Common myeloid progenitor, CD34-positive (primary cell): ENCODE measurements at regions of chr1 and their contacts with region 1.

Region 1: GRCh38 chr1:162056043-162056442 is 13.4 kb upstream of the NOS1AP start:
- DNase-seq: peak; percentile 51 to 72 (median 69)
- H3K4me3 ChIP-seq: peak overlapping the region in 1 of 7 experiments; percentile 29
- H3K27ac ChIP-seq: no peak overlapping the region
- H3K4me1 ChIP-seq: peaks cover 0 to 6% (median under 1%) of the 10 kb centered on the region in 4 experiments
- H3K27me3 ChIP-seq: no peaks in the 10 kb centered on the region

Region 2: DNA sequence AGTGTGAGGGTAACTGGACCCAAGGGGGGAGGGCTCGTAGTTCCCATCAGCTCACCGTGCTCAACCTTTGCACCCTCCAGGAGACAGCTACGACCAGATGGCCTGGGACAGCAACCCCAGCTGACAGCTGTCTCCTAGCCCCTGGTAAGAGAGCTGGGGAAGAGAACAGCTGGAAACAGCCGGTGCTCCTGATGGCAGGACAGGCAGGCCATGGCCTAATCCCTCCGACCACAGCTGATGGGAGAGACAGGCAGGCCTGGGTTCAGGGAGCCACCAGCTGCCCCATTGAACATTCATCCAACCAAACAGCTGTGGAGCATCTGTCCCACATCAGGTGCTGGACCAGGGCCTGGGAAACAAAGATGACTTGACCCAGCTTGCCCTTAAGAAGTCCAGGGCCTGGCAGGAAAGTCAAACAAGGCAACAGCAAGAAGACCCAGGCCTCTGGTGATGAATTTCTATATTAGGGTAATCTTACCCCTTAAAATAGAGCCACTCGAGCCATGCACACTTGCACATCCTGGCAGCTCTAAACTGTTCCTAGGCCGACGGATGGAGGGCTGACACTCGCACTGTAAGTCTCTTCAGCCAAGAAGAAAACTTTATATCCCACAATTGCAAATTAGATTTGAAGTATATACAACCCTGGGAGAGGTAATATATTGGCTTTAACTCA is 44.6 kb before region 1 on chr1:
- CTCF ChIA-PET with region 1: no interaction called
- POLR2A ChIA-PET with region 1: no interaction called
- DNase-seq: no peak
- H3K4me3 ChIP-seq: no peak overlapping the region
- H3K27ac ChIP-seq: no peak overlapping the region
- H3K4me1 ChIP-seq: peaks cover 0 to 4% (median 2%) of the 10 kb centered on the region in 4 experiments
- H3K27me3 ChIP-seq: no peaks in the 10 kb centered on the region

Region 3: GRCh38 chr1:162213281-162213912 is 157.4 kb after region 1 on chr1:
- CTCF ChIA-PET with region 1: no interaction called
- POLR2A ChIA-PET with region 1: no interaction called
- DNase-seq: no peak
- H3K4me3 ChIP-seq: no peak overlapping the region
- H3K27ac ChIP-seq: no peak overlapping the region
- H3K4me1 ChIP-seq: peaks cover 0 to 7% (median 0%) of the 10 kb centered on the region in 4 experiments
- H3K27me3 ChIP-seq: no peaks in the 10 kb centered on the region

Region 4: GRCh38 chr1:162279136-162279498 is 223.1 kb after region 1 on chr1:
- CTCF ChIA-PET with region 1: interaction called, 10 read pairs
- POLR2A ChIA-PET with region 1: no interaction called
- DNase-seq: no peak
- H3K4me3 ChIP-seq: no peak overlapping the region
- H3K27ac ChIP-seq: no peak overlapping the region
- H3K4me1 ChIP-seq: no peaks in the 10 kb centered on the region
- H3K27me3 ChIP-seq: no peaks in the 10 kb centered on the region